Activated B cell treated with CpG ODN at 0.5 μM for 24 hours (primary cell): ENCODE measurements at regions of chr17 and their contacts with region 1.

Region 1: GRCh38 chr17:21043286-21044232 is 748 bp upstream of the USP22 start:
- DNase-seq: peak; percentile 92
- ATAC-seq: peak; percentile 78
- H3K4me3 Mint-ChIP-seq: peak overlapping the region; percentile 74
- H3K27ac Mint-ChIP-seq: peak overlapping the region; percentile 89
- H3K4me1 Mint-ChIP-seq: peaks cover 37% of the 10 kb centered on the region
- H3K27me3 Mint-ChIP-seq: no peaks in the 10 kb centered on the region
- CTCF ChIP-seq: peak; percentile 21

Region 2: GRCh38 chr17:20155258-20156195 is 888.0 kb before region 1 on chr17:
- CTCF ChIA-PET with region 1: no interaction called
- POLR2A ChIA-PET with region 1: interaction called, 6 read pairs
- intact Hi-C with region 1: loop called (anchors 2 kb)
- DNase-seq: peak; percentile 99
- ATAC-seq: peak; percentile 93
- H3K4me3 Mint-ChIP-seq: no peak overlapping the region
- H3K27ac Mint-ChIP-seq: no peak overlapping the region
- H3K4me1 Mint-ChIP-seq: peaks cover 6% of the 10 kb centered on the region
- H3K27me3 Mint-ChIP-seq: no peaks in the 10 kb centered on the region
- CTCF ChIP-seq: no peak

Region 3: GRCh38 chr17:21012736-21013135 is 30.8 kb before region 1 on chr17:
- CTCF ChIA-PET with region 1: no interaction called
- POLR2A ChIA-PET with region 1: no interaction called
- intact Hi-C with region 1: no loop called
- DNase-seq: no peak
- ATAC-seq: no peak
- H3K4me3 Mint-ChIP-seq: no peak overlapping the region
- H3K27ac Mint-ChIP-seq: no peak overlapping the region
- H3K4me1 Mint-ChIP-seq: peaks cover 10% of the 10 kb centered on the region
- H3K27me3 Mint-ChIP-seq: no peaks in the 10 kb centered on the region
- CTCF ChIP-seq: no peak

Region 4: GRCh38 chr17:21098934-21099689 is 55.6 kb after region 1 on chr17:
- CTCF ChIA-PET with region 1: interaction called, 29 read pairs
- POLR2A ChIA-PET with region 1: interaction called, 30 read pairs
- intact Hi-C with region 1: loop called (anchors 1 kb)
- DNase-seq: peak; percentile 45
- ATAC-seq: peak; percentile 96
- H3K4me3 Mint-ChIP-seq: peak overlapping the region; percentile 90
- H3K27ac Mint-ChIP-seq: no peak overlapping the region
- H3K4me1 Mint-ChIP-seq: peaks cover 17% of the 10 kb centered on the region
- H3K27me3 Mint-ChIP-seq: no peaks in the 10 kb centered on the region
- CTCF ChIP-seq: no peak

Region 5: DNA sequence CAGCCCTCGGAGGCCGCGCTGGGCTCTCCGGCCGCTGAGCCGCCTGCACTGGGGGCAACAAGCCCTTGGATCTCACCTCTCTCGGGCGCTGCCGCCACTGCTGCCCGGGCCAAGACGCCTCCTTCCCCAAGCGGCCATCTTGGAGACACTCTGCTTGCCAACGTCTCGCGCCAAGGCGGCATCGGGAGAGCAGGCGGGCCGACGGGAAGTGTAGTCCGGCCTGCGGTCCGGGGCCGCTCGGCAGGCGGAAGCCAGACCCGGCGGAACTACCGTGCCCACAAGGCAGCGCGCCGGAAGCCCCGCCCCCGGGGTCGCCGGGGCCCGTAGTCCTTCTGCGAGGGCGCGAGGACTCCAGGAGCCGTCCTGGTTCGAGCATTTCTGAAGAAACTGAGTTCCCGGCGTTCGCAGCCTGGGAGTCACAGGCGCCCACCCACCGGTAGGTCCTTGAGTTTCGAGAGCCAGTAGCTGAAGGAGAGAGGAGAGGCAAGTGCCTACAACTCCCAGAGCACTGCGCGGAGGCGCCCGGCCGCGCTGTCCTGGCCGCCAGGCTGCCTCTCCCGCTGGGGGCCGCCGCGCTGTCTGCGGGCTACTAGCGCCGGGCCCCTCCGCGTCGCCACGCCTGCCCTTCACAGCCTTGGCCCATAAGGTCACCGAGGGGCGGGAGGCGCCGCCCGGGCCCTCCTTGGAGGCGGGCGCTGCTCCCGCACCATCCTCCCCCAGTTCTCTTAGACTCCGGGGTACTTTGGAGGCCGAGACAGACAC is 170.6 kb after region 1 on chr17 and contains the start of gene TMEM11:
- CTCF ChIA-PET with region 1: no interaction called
- POLR2A ChIA-PET with region 1: interaction called, 20 read pairs
- intact Hi-C with region 1: loop called (anchors 1 kb)
- DNase-seq: peak; percentile 97
- ATAC-seq: peak; percentile 93
- H3K4me3 Mint-ChIP-seq: peak within 1 kb of the TSS; percentile 89
- H3K27ac Mint-ChIP-seq: peak within 1 kb of the TSS; percentile 90
- H3K4me1 Mint-ChIP-seq: peaks cover 48% of the 10 kb centered on the region
- H3K27me3 Mint-ChIP-seq: no peaks in the 10 kb centered on the region
- CTCF ChIP-seq: no peak
- total RNA-seq, gene TMEM11: 21.2 and 22.2 TPM in 2 replicates

Region 6: DNA sequence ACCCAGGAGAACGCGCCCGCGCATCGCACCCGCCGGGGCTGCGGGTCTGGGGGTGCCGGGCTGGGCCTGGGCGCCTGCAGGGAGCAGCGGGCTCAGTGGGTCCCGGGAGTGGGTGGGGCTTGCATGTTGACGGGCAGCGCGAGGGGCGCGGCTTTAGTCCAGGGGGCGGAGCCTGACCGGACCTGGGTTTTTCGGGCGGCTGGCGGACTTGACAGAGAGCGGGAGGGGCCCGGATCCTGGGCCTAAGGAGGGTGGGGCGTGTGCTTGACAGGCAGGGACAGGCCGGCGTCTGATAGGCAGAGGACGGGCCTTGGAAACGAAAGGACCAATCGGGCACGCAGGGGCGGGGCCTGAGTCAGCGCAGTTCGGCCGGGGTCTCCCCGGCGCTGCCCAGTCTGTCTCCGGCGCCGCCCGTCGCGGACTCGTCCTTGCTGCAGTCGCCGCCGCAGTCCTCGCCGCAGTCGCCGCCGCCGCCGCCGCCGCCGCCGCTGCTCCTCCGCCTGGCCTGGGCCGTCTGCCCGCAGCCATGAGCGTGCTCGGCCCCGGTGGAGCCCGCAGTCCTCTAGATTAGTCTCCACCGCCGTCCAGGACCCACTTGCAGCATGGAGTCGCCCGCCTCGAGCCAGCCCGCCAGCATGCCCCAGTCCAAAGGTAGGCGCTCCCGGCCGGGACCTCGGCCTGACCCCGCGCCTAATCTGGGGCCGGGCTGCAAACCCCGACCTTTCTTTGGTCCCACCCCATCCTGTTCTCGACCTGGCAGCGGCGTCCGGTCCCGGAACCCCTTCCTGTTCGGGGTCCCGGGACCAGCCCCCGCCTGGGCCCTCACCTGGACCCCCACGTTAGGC is 241.0 kb after region 1 on chr17 and contains the start of gene MAP2K3:
- CTCF ChIA-PET with region 1: interaction called, 10 read pairs
- POLR2A ChIA-PET with region 1: interaction called, 27 read pairs
- intact Hi-C with region 1: loop called (anchors 1 kb)
- DNase-seq: peak; percentile 98
- ATAC-seq: peak; percentile 69
- H3K4me3 Mint-ChIP-seq: peak within 1 kb of the TSS; percentile 95
- H3K27ac Mint-ChIP-seq: peak within 1 kb of the TSS; percentile 96
- H3K4me1 Mint-ChIP-seq: peaks cover 77% of the 10 kb centered on the region
- H3K27me3 Mint-ChIP-seq: no peaks in the 10 kb centered on the region
- CTCF ChIP-seq: no peak
- total RNA-seq, gene MAP2K3: 75.1 and 81.1 TPM in 2 replicates

Region 7: GRCh38 chr17:21301593-21302545 is 258.3 kb after region 1 on chr17:
- CTCF ChIA-PET with region 1: no interaction called
- POLR2A ChIA-PET with region 1: no interaction called
- intact Hi-C with region 1: no loop called
- DNase-seq: no peak
- ATAC-seq: no peak
- H3K4me3 Mint-ChIP-seq: no peak overlapping the region
- H3K27ac Mint-ChIP-seq: no peak overlapping the region
- H3K4me1 Mint-ChIP-seq: no peaks in the 10 kb centered on the region
- H3K27me3 Mint-ChIP-seq: no peaks in the 10 kb centered on the region
- CTCF ChIP-seq: no peak

Region 8: DNA sequence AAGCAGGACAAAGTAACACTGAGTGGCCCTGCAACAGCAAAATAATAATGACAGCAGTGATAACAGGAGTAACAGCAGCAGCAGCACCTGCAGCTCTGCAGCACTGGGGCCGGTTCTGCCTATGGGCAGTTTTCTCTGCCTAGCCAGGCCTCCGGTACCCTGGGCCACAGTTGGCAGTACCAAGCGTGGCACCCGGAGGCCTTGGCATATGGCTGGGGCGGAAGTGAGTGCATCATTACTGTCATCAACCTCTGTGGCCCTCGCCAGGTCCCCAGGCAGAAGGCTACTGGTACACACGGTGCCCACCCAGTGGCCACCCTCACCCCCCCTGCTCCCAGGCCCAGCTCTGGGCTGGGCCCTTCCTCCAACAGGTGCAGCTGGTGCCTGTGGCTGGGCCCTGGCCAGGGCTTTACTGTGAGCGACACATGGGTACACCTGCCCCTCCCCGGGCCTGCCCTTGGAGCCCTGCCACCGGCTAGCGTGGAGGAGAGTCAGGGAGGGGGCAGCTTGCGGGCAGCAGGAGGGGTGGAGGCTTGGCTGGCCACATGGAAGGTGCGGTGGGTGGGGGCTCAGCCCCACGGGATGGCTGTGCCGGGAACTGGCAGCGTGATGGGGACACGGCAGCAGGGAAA is 335.6 kb after region 1 on chr17:
- CTCF ChIA-PET with region 1: no interaction called
- POLR2A ChIA-PET with region 1: no interaction called
- intact Hi-C with region 1: no loop called
- DNase-seq: no peak
- ATAC-seq: no peak
- H3K4me3 Mint-ChIP-seq: no peak overlapping the region
- H3K27ac Mint-ChIP-seq: no peak overlapping the region
- H3K4me1 Mint-ChIP-seq: peaks cover 16% of the 10 kb centered on the region
- H3K27me3 Mint-ChIP-seq: peaks cover 34% of the 10 kb centered on the region
- CTCF ChIP-seq: no peak